B cell (primary cell): ENCODE measurements at regions of chr16 and their contacts with region 1.

Region 1: GRCh38 chr16:67561824-67562525 is 351 bp upstream of the CTCF start:
- DNase-seq: peak; percentile 99
- ATAC-seq: peak; percentile 74
- H3K4me3 ChIP-seq: peak overlapping the region; percentile 50 to 76 (median 60)
- H3K4me3 Mint-ChIP-seq: peak overlapping the region; percentile 89
- H3K27ac ChIP-seq: peak overlapping the region; percentile 71 to 80
- H3K27ac Mint-ChIP-seq: peak overlapping the region; percentile 95
- H3K4me1 ChIP-seq: peaks cover 42 to 55% of the 10 kb centered on the region in 2 donors
- H3K4me1 Mint-ChIP-seq: peaks cover 50% of the 10 kb centered on the region
- H3K27me3 ChIP-seq: no peaks in the 10 kb centered on the region
- H3K27me3 Mint-ChIP-seq: no peaks in the 10 kb centered on the region
- CTCF ChIP-seq: no peak

Region 2: GRCh38 chr16:67499106-67499505 is 62.9 kb before region 1 on chr16:
- CTCF ChIA-PET with region 1: interaction called, 8 read pairs
- POLR2A ChIA-PET with region 1: interaction called, 3 read pairs
- intact Hi-C with region 1: loop called (anchors 2 kb)
- DNase-seq: no peak
- ATAC-seq: no peak
- H3K4me3 ChIP-seq: no peak overlapping the region
- H3K4me3 Mint-ChIP-seq: no peak overlapping the region
- H3K27ac ChIP-seq: no peak overlapping the region
- H3K27ac Mint-ChIP-seq: peak overlapping the region; percentile 70
- H3K4me1 ChIP-seq: peaks cover 13 to 17% of the 10 kb centered on the region in 2 donors
- H3K4me1 Mint-ChIP-seq: peaks cover 29% of the 10 kb centered on the region
- H3K27me3 ChIP-seq: no peaks in the 10 kb centered on the region
- H3K27me3 Mint-ChIP-seq: no peaks in the 10 kb centered on the region
- CTCF ChIP-seq: no peak

Region 3: GRCh38 chr16:67537270-67537635 is 24.7 kb before region 1 on chr16:
- CTCF ChIA-PET with region 1: interaction called, 42 read pairs
- POLR2A ChIA-PET with region 1: interaction called, 53 read pairs
- intact Hi-C with region 1: no loop called
- DNase-seq: peak; percentile 71
- ATAC-seq: peak; percentile 44
- H3K4me3 ChIP-seq: peak overlapping the region; percentile 4 to 78 (median 69)
- H3K4me3 Mint-ChIP-seq: peak overlapping the region; percentile 91
- H3K27ac ChIP-seq: peak overlapping the region; percentile 91 to 97
- H3K27ac Mint-ChIP-seq: peak overlapping the region; percentile 95
- H3K4me1 ChIP-seq: peaks cover 63 to 79% of the 10 kb centered on the region in 2 donors
- H3K4me1 Mint-ChIP-seq: peaks cover 76% of the 10 kb centered on the region
- H3K27me3 ChIP-seq: no peaks in the 10 kb centered on the region
- H3K27me3 Mint-ChIP-seq: no peaks in the 10 kb centered on the region
- CTCF ChIP-seq: no peak

Region 4: DNA sequence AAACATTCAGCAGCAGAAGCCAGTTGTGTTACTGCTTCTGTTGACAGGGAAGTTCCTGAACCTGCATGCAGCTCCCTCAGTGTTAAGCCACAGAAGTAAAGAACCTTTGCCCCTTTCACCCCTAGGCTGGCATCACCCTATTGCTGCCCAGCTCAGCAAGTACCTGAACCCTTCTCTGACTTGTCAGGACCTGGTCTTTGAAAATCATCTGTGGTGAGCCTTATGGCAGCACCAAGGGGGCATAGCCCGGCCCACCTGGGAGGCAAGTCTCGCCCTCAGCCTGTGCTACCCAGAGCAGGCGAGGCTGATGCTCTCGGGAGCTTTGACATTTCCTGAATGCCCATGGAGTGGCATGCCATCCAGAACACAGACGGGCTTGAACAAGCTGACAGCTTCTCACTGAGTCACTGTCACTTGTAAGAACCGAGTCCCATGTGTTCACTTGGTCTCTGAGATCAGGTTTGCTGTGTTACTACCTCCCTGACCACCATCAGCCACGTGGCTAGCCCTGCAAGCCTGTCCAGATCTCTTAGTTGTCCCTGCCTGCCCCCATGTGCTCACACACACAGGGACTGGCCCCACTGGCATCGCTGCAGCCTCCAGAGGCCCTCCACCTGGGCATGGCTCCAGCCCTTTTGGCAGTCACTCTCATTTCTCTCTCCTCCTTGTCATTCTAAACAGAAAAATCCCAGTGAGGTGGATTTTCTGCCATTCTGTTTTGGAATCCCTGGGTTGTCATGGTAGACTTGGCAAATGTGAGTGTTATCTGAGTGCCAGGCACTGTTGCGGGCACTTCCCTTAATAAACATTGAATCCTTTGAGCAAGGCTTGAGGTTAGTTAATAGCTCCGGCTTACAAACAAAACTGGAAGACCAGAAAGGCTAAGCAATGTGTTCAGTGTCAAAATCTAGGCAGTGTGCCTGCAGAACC is 80.1 kb after region 1 on chr16:
- CTCF ChIA-PET with region 1: interaction called, 64 read pairs
- POLR2A ChIA-PET with region 1: interaction called, 4 read pairs
- intact Hi-C with region 1: loop called (anchors 1 kb)
- DNase-seq: no peak
- ATAC-seq: no peak
- H3K4me3 ChIP-seq: no peak overlapping the region
- H3K4me3 Mint-ChIP-seq: no peak overlapping the region
- H3K27ac ChIP-seq: no peak overlapping the region
- H3K27ac Mint-ChIP-seq: no peak overlapping the region
- H3K4me1 ChIP-seq: peaks cover 12 to 20% of the 10 kb centered on the region in 2 donors
- H3K4me1 Mint-ChIP-seq: peaks cover 16% of the 10 kb centered on the region
- H3K27me3 ChIP-seq: no peaks in the 10 kb centered on the region
- H3K27me3 Mint-ChIP-seq: no peaks in the 10 kb centered on the region
- CTCF ChIP-seq: no peak

Region 5: DNA sequence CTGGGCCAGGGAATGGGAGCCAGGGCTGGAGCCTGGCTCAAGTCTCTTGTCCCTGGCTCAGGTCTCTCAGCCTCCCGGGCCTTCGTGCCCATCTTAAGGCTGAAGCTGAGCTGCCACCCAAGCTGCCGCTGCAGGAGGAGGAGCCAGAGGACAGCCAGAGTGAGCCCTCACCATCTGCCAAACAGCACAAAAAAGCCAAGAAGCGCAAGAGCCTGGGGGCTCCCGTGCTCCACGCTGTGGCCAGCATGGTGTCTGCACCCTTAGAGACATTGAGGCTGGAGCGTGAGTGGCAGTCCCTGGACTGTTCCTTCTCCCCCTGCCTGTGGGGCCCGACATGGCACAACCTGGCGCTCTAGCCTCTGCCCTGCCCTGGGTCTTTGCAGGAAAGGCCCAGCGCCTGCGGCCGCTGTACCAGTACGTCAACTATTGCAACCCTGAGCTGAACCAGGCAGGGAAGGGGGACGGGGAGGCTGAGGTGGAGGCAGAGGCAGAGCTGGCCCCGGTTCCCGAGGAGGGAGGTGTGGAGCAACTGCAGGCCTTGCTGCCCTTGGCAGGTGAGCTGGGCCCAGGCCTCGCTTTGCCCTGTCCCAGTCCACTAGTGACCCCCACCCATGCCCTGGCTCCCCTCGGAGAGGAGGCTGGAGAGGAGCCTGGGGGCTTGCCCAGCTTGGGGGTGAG is 106.0 kb after region 1 on chr16:
- CTCF ChIA-PET with region 1: interaction called, 15 read pairs
- POLR2A ChIA-PET with region 1: interaction called, 7 read pairs
- intact Hi-C with region 1: loop called (anchors 1 kb)
- DNase-seq: peak; percentile 89
- ATAC-seq: peak; percentile 81
- H3K4me3 ChIP-seq: peak overlapping the region in 4 of 5 experiments; percentile 67 to 91 (median 80)
- H3K4me3 Mint-ChIP-seq: peak overlapping the region; percentile 91
- H3K27ac ChIP-seq: peak overlapping the region; percentile 77 to 86
- H3K27ac Mint-ChIP-seq: peak overlapping the region; percentile 84
- H3K4me1 ChIP-seq: peaks cover 36 to 49% of the 10 kb centered on the region in 2 donors
- H3K4me1 Mint-ChIP-seq: peaks cover 49% of the 10 kb centered on the region
- H3K27me3 ChIP-seq: no peaks in the 10 kb centered on the region
- H3K27me3 Mint-ChIP-seq: no peaks in the 10 kb centered on the region
- CTCF ChIP-seq: peak; percentile 75

Region 6: GRCh38 chr16:67781565-67781921 is 219.6 kb after region 1 on chr16:
- CTCF ChIA-PET with region 1: no interaction called
- POLR2A ChIA-PET with region 1: no interaction called
- intact Hi-C with region 1: no loop called
- DNase-seq: no peak
- ATAC-seq: no peak
- H3K4me3 ChIP-seq: no peak overlapping the region
- H3K4me3 Mint-ChIP-seq: no peak overlapping the region
- H3K27ac ChIP-seq: peak overlapping the region in 1 of 2 donors; percentile 54
- H3K27ac Mint-ChIP-seq: peak overlapping the region; percentile 69
- H3K4me1 ChIP-seq: peaks cover 18 to 21% of the 10 kb centered on the region in 2 donors
- H3K4me1 Mint-ChIP-seq: peaks cover 35% of the 10 kb centered on the region
- H3K27me3 ChIP-seq: no peaks in the 10 kb centered on the region
- H3K27me3 Mint-ChIP-seq: no peaks in the 10 kb centered on the region
- CTCF ChIP-seq: no peak